IMR-90 (cell line): ENCODE measurements at regions of chr11 and their contacts with region 1.

Region 1: GRCh38 chr11:44286268-44286880 is 23.6 kb downstream of the ALX4 start:
- DNase-seq: peak; percentile 44
- ATAC-seq: peak; percentile 73
- H3K4me3 ChIP-seq: no peak overlapping the region
- H3K27ac ChIP-seq: no peak overlapping the region
- H3K4me1 ChIP-seq: 0 out of 2 replicates have a peak, but pooled peaks cover 2% of the 10 kb centered on the region
- H3K27me3 ChIP-seq: peaks cover 11% of the 10 kb centered on the region
- CTCF ChIP-seq: peak; percentile 77
- POLR2A ChIP-seq: no peak
- RAD21 ChIP-seq: peak; percentile 73

Region 2: DNA sequence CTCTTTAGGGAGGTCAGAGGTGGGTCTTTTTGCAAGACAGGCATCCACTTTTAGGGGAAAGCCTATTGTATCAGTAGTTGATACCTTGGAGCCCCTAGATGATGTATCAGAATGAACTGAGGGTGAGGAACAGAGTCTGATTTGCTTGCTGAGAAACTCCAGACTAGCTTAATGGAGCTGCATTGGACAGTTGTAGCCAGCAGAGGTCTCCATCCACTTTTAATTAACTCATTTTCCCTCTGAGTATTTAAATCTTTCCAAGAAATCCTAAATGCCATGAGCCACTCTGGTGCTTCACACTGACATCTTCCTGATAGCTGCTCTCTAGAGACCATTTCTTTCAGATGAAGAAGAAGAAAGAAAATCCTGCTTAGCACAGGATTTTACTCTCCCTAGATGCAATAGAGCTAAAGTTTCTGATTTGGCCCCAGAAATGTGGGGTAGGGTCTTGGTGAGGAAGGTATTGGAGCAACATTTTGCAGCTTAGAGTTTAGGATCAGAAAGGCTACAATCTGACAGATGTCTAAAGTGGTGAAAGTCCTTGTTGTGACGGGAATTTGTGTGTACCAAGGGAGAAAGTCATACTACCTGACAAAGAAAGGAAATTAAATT is 152.9 kb before region 1 on chr11:
- CTCF ChIA-PET with region 1: interaction called, 5 read pairs
- POLR2A ChIA-PET with region 1: no interaction called
- dilution Hi-C with region 1: no loop called
- in situ Hi-C with region 1: no loop called
- intact Hi-C with region 1: loop called (anchors 5 kb)
- DNase-seq: peak; percentile 59
- ATAC-seq: peak; percentile 75
- H3K4me3 ChIP-seq: no peak overlapping the region
- H3K27ac ChIP-seq: no peak overlapping the region
- H3K4me1 ChIP-seq: peaks cover 4% of the 10 kb centered on the region; the same call in 1 of the 2 replicates
- H3K27me3 ChIP-seq: no peaks in the 10 kb centered on the region
- CTCF ChIP-seq: peak; percentile 72
- POLR2A ChIP-seq: no peak
- RAD21 ChIP-seq: peak; percentile 73

Region 3: DNA sequence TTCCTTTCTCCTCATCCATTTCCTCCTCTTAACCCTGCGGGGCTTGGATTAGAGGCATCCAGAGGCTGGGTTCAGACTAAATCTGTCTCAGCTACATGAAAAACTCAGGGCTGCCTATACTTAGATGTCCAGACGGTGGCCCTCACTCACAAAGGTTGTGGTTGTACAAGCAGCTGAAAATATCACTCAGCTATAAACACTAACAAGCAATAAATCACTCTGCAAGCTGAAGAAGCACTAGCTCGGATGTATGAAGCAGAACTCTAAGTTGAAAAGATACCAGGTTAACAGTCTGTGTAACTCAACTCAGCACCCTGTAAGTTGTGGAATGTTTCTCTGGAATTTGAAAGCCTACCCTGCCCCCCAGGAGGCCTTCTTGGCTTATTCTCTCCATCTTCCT is 108.0 kb before region 1 on chr11:
- CTCF ChIA-PET with region 1: interaction called, 12 read pairs
- POLR2A ChIA-PET with region 1: no interaction called
- dilution Hi-C with region 1: no loop called
- in situ Hi-C with region 1: no loop called
- intact Hi-C with region 1: no loop called
- DNase-seq: peak; percentile 61
- ATAC-seq: peak; percentile 92
- H3K4me3 ChIP-seq: no peak overlapping the region
- H3K27ac ChIP-seq: no peak overlapping the region
- H3K4me1 ChIP-seq: peaks cover 8% of the 10 kb centered on the region
- H3K27me3 ChIP-seq: no peaks in the 10 kb centered on the region
- CTCF ChIP-seq: peak; percentile 40
- POLR2A ChIP-seq: no peak
- RAD21 ChIP-seq: peak; percentile 32

Region 4: DNA sequence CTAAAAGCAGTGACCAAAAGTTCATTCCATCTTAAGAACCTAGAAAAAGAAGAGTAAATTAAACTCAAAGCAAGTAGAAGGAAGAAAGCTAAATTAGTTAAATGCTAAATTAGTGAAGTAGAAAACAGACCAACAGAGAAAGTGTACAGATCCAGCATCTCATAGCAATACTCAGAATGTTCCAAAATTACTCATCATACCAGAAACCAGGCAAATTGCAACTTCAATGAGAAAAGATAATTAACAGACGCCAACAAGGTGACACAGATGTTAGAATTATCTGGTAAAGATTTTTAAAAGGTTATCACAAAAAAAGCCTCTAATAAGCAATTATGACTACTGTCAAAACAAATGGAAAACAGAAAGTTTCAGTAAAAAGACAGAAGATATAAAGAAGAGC is 73.2 kb before region 1 on chr11:
- CTCF ChIA-PET with region 1: no interaction called
- POLR2A ChIA-PET with region 1: no interaction called
- dilution Hi-C with region 1: no loop called
- in situ Hi-C with region 1: no loop called
- intact Hi-C with region 1: loop called (anchors 2 kb)
- DNase-seq: no peak
- ATAC-seq: no peak
- H3K4me3 ChIP-seq: no peak overlapping the region
- H3K27ac ChIP-seq: no peak overlapping the region
- H3K4me1 ChIP-seq: no peaks in the 10 kb centered on the region
- H3K27me3 ChIP-seq: no peaks in the 10 kb centered on the region
- CTCF ChIP-seq: no peak
- POLR2A ChIP-seq: no peak
- RAD21 ChIP-seq: no peak

Region 5: DNA sequence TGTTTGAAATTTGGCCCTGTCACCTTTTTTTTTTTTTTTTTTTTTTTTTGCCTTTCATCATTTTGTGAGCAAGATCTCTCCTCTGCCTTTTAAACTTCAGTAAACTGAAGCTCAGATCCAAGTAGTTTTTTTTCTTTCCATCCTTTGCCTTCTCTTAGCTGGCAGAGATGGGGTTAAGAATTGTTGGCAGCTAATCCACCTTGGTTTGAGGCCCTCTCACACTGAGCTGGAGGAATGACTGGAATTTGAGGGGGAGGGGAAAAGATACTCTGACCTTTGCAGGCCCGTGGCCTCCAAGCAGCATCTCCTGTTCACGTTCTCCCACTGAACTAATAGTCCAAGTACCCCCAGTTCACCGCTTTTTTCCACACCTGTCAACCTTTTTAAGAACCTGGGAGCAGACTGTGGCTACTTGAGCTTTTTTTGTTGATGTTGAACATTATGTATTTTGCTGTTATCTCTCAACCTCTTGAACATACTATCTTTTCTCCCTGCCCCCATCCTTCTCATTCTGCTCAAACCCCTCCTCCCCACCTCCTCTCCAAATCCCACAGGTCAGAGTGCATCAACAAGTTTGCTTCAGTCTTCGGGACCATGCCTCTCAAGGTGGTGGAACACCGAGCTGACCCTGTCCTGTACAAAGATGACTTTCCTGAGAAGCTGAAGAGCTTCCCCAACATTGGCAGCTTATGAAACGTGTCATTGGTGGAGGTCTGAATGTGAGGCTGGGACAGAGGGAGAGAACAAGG is 42.6 kb before region 1 on chr11:
- CTCF ChIA-PET with region 1: interaction called, 4 read pairs
- POLR2A ChIA-PET with region 1: no interaction called
- dilution Hi-C with region 1: no loop called
- in situ Hi-C with region 1: no loop called
- intact Hi-C with region 1: loop called (anchors 1 kb)
- DNase-seq: peak; percentile 46
- ATAC-seq: peak; percentile 65
- H3K4me3 ChIP-seq: no peak overlapping the region
- H3K27ac ChIP-seq: peak overlapping the region; percentile 51
- H3K4me1 ChIP-seq: peaks cover 26% of the 10 kb centered on the region
- H3K27me3 ChIP-seq: no peaks in the 10 kb centered on the region
- CTCF ChIP-seq: no peak
- POLR2A ChIP-seq: no peak
- RAD21 ChIP-seq: no peak

Region 6: DNA sequence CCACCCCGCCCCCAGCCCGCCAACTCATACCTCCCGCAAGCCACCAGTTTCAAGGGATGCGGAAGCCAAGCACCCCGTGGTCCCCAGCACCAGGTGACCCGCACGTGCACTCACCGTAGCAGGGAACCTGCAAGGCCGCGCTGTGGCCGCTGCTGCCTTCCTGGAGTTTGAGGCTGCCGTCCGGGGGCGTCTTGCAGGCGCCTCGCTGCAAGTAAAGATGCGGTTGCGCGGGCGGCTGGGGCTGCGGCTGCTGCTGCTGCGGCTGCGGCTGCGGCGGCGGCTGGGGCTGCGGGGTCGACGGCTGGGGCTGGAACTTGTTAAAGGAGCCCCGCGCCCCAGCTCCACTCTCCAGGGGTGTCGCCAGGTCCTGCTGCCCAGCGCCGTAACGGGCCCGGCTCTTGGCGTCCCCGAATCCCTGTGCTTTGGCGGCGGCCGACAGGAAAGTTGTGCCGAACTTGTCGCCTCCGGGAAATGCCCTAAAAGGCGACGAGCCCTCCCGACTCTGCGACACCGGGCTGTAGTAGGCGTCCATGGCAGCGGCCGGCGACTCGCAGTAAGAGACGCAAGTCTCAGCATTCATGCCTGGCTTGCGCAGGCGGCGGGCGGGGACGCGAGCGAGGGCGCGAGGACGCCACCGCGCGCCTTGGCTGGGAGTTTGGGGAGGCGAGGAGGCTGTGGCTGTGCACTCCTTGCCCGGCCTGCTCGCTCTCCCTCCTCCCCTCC is 23.3 kb after region 1 on chr11 and contains the start of gene ALX4:
- CTCF ChIA-PET with region 1: no interaction called
- POLR2A ChIA-PET with region 1: no interaction called
- dilution Hi-C with region 1: no loop called
- in situ Hi-C with region 1: no loop called
- intact Hi-C with region 1: no loop called
- DNase-seq: no peak
- ATAC-seq: peak; percentile 69
- H3K4me3 ChIP-seq: no peak within 1 kb of the TSS
- H3K27ac ChIP-seq: no peak within 1 kb of the TSS
- H3K4me1 ChIP-seq: peaks cover 2% of the 10 kb centered on the region; the same call in 1 of the 2 replicates
- H3K27me3 ChIP-seq: peaks cover 98% of the 10 kb centered on the region
- CTCF ChIP-seq: no peak
- POLR2A ChIP-seq: no peak
- RAD21 ChIP-seq: no peak
- total RNA-seq, gene ALX4: not detected in 2 replicates

Region 7: GRCh38 chr11:44483919-44484610 is 197.7 kb after region 1 on chr11:
- CTCF ChIA-PET with region 1: no interaction called
- POLR2A ChIA-PET with region 1: no interaction called
- dilution Hi-C with region 1: no loop called
- in situ Hi-C with region 1: no loop called
- intact Hi-C with region 1: loop called (anchors 2 kb)
- DNase-seq: peak; percentile 5
- ATAC-seq: peak; percentile 40; the same call in 1 of the 2 replicates
- H3K4me3 ChIP-seq: no peak overlapping the region
- H3K27ac ChIP-seq: no peak overlapping the region
- H3K4me1 ChIP-seq: no peaks in the 10 kb centered on the region
- H3K27me3 ChIP-seq: peaks cover 4% of the 10 kb centered on the region
- CTCF ChIP-seq: peak; percentile 39; the same call in 1 of the 2 replicates
- POLR2A ChIP-seq: no peak
- RAD21 ChIP-seq: peak; percentile 47

Region 8: DNA sequence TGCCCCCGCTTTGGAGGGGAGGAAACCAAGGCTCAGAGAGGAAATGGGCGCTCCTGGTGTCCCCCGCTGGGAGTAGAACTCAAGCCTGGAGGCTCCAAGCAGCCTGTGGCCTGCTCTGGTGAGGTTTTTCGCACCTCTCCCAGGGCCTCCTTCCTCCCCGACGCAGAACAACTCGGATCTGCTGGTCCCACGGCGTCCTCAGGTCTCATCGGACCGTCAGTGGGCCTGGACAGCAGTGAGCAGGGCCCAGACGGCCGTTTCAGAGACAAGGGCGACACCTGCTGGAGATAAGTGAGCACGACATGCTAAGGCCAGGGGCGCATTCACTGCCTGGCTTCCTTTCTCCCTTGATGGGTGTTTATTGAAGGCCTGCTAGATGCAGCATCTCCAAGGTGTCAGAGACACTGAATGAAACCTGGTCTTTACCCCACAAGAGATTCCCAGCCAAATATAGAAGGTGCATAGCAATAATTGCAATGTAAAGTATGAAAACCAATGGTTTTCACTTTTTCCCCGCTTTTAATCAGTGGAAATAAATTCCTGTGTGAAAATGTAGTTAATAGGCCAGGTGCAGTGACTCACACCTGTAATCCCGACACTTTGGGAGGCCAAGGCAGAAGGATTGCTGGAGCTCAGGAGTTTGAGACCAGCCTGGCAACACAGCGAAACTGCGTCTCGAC is 252.1 kb after region 1 on chr11:
- CTCF ChIA-PET with region 1: no interaction called
- POLR2A ChIA-PET with region 1: no interaction called
- dilution Hi-C with region 1: no loop called
- in situ Hi-C with region 1: loop called (anchors 10 kb)
- intact Hi-C with region 1: loop called (anchors 1 kb)
- DNase-seq: peak; percentile 56
- ATAC-seq: peak; percentile 100
- H3K4me3 ChIP-seq: no peak overlapping the region
- H3K27ac ChIP-seq: no peak overlapping the region
- H3K4me1 ChIP-seq: no peaks in the 10 kb centered on the region
- H3K27me3 ChIP-seq: peaks cover 32% of the 10 kb centered on the region
- CTCF ChIP-seq: peak; percentile 98
- POLR2A ChIP-seq: peak; percentile 42; the same call in 1 of the 2 replicates
- RAD21 ChIP-seq: peak; percentile 98